ENCODE measurements at regions of chr9 and their contacts with region 1.

Region 1: GRCh38 chr9:78369639-78370219 is 72.8 kb downstream of the PSAT1 start:
- DNase-seq: peak; percentile 61
- ATAC-seq: peak; percentile 45
- H3K4me3 Mint-ChIP-seq: no peak overlapping the region
- H3K27ac Mint-ChIP-seq: no peak overlapping the region
- H3K4me1 Mint-ChIP-seq: no peaks in the 10 kb centered on the region
- H3K27me3 Mint-ChIP-seq: peaks cover 27% of the 10 kb centered on the region

Region 2: GRCh38 chr9:78261403-78262001 is 108.2 kb before region 1 on chr9:
- CTCF ChIA-PET with region 1: interaction called, 38 read pairs
- DNase-seq: no peak
- ATAC-seq: no peak
- H3K4me3 Mint-ChIP-seq: no peak overlapping the region
- H3K27ac Mint-ChIP-seq: no peak overlapping the region
- H3K4me1 Mint-ChIP-seq: no peaks in the 10 kb centered on the region
- H3K27me3 Mint-ChIP-seq: no peaks in the 10 kb centered on the region

Region 3: DNA sequence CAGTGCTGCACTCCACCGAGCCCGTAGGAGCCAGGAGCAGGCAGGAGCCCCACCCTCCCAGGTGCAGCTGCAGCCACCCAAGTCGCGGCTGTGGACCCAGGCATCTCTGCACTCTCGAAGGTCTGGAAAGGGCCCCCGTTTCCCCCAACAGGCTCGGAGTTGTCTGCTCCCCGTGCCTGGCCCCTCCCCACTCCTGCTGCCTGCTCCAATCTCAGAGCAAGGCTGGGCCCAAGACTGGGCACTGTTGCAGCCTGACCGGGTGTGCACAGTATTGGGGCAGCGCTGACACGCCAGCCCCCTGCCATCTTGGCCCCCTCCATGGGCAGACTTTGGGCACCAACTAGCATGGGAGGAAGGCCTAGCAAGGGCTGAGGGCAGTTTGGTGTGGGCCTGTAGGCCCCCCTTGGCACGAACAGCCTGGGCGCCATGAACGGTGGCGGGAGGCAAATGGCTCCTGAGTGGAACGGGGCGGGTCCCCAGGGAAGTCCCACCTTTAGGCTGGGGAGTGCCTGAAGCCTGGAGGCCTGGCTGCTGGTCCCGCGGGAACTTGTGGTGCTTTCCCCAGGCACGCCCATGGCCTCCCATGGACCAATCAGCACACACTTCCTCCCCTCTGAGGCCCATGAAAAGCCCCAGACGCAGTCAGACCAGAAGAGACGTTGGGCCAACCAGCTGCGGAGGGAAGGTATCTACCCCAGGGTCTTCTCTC is 12.4 kb before region 1 on chr9:
- CTCF ChIA-PET with region 1: no interaction called
- DNase-seq: no peak
- ATAC-seq: no peak
- H3K4me3 Mint-ChIP-seq: no peak overlapping the region
- H3K27ac Mint-ChIP-seq: no peak overlapping the region
- H3K4me1 Mint-ChIP-seq: peaks cover 2% of the 10 kb centered on the region
- H3K27me3 Mint-ChIP-seq: no peaks in the 10 kb centered on the region

Region 4: GRCh38 chr9:78383130-78383529 is 13.4 kb after region 1 on chr9:
- CTCF ChIA-PET with region 1: interaction called, 16 read pairs
- DNase-seq: no peak
- ATAC-seq: no peak
- H3K4me3 Mint-ChIP-seq: no peak overlapping the region
- H3K27ac Mint-ChIP-seq: no peak overlapping the region
- H3K4me1 Mint-ChIP-seq: no peaks in the 10 kb centered on the region
- H3K27me3 Mint-ChIP-seq: peaks cover 7% of the 10 kb centered on the region

Region 5: GRCh38 chr9:78393340-78393739 is 23.6 kb after region 1 on chr9:
- CTCF ChIA-PET with region 1: no interaction called
- DNase-seq: no peak
- ATAC-seq: no peak
- H3K4me3 Mint-ChIP-seq: no peak overlapping the region
- H3K27ac Mint-ChIP-seq: no peak overlapping the region
- H3K4me1 Mint-ChIP-seq: no peaks in the 10 kb centered on the region
- H3K27me3 Mint-ChIP-seq: peaks cover 3% of the 10 kb centered on the region

Region 6: DNA sequence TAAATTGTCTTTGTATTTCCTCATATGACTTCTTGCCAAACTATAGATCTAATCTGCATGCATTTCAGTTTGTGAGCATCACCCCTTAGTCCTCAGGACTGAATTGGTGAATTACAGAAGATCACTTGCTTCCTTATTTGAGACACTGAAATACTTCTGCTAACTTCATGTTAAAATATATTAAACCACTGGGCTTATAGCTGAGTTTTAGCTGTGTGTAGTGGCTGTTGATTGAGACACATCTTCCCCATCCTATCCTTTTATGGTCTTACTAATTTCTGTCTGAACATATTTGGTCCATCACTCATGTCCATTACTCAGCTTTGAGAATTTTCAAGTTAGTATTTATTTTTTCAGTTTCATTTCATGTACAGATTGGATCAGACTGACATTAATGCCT is 223.1 kb after region 1 on chr9:
- CTCF ChIA-PET with region 1: no interaction called
- DNase-seq: no peak
- ATAC-seq: no peak
- H3K4me3 Mint-ChIP-seq: no peak overlapping the region
- H3K27ac Mint-ChIP-seq: no peak overlapping the region
- H3K4me1 Mint-ChIP-seq: no peaks in the 10 kb centered on the region
- H3K27me3 Mint-ChIP-seq: no peaks in the 10 kb centered on the region